ENCODE measurements at regions of chr17 and their contacts with region 1.

Region 1: DNA sequence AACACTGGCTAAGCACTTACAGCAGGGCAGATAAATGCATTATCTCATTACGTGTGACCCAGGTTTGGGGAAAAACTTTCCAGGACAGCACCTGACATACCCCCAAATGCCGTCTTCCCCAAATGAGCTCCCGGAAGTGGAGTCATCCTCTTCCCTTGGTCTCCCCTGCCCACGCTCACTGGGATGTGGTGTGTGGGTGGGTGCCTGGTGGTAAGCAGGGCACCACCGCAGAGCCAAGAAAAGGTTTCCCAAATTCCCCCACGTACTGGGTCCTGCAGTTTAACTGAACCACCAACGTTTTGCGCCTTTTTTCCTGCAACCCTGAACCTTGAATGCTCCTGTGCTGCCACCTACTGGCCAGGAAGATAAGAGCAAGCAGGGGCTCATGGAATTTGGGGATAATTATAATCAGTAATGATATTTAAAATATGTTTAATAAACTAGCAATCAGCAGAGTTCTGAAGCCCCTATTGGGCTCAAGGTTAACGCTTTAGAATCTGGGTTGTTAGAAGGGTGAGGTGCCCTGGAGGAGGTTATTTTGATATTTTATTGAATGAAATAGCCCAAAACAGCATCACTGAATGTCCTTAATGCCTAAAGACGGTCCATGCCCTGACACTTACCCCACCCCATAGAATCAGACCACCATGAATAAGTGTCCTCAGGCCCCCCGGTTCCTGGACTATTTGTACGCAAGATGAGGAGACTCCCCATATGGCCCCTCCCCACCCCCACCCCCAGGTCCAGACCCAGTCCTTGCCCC is 8.0 kb downstream of the SPPL2C start:
- H3K4me3 ChIP-seq: no peak overlapping the region
- H3K27ac ChIP-seq: no peak overlapping the region
- H3K4me1 ChIP-seq: no peaks in the 10 kb centered on the region
- CTCF ChIP-seq: peak; percentile 67

Region 2: DNA sequence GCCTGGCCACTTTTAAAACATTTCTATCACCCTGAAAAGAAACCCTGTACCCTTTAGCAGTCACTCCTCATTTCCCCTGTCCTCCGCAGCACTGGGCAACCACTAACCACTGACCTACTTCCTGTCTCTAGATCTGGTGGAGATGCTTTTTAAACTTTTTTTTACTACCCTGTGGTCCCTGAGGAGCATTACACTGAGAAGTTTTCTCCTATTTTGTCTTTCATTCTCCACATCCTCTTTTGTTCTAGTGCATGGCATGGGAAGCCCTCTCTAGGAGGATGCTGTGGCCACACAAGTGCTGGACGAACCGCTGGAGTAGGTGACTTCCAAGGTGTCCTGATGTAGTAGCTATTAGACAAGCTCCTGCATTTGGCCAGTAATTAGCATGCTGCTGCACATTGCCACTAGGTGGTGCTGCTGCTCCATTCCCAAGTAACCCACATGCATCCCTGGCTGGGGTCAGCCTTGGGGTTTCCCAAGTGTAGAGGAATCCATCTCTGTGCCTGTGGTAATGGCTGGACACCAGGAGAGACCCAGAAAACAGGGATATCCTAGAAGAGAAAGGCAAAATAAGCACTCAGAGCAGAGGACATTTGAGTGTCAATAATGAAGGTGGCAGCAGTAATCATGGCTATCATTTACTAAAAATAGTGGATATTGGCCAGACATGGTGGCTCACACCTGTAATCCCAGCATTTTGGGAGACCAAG is 212.4 kb before region 1 on chr17:
- CTCF ChIA-PET with region 1: interaction called, 49 read pairs
- POLR2A ChIA-PET with region 1: no interaction called
- H3K4me3 ChIP-seq: no peak overlapping the region
- H3K27ac ChIP-seq: no peak overlapping the region
- H3K4me1 ChIP-seq: no peaks in the 10 kb centered on the region
- CTCF ChIP-seq: peak; percentile 89

Region 3: DNA sequence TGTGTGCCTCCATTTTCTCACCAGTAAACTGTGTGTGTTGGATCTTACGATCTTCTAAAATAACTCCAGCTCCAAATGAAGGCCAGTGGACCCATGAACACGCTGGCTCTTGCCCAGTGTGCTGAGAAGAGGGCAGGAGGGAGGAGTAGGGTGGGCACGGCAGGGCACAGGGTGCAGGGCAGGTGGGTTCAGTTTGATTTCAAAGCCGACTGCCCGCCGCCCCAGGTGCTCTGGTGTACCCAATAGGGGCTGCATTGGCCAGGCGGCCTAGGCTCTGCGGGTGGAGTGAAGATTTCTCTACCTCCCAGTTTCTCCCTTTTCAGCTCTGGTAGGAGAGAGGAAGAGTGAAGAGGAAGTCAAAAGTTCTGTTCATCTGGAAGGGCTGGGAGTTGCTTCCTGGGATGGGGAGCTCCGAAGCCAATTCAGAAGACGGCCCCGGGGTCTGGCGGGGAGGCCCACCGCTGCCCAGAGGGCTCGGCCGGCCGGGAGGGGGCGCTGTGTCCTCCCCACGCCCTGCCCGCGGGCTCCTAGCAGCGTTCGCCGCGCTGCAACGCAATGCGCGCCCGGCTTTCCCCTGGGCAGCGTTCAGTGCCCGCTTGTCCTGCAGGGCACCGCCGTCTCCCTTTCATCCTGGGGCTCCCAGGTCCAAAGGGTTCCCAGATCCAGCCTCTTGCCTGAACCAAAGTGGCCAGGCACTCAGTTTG is 69.7 kb before region 1 on chr17:
- CTCF ChIA-PET with region 1: interaction called, 12 read pairs
- POLR2A ChIA-PET with region 1: no interaction called
- H3K4me3 ChIP-seq: peak overlapping the region; percentile 56
- H3K27ac ChIP-seq: peak overlapping the region; percentile 51; the same call in 1 of the 2 replicates
- H3K4me1 ChIP-seq: no peaks in the 10 kb centered on the region
- CTCF ChIP-seq: peak; percentile 82

Region 4: DNA sequence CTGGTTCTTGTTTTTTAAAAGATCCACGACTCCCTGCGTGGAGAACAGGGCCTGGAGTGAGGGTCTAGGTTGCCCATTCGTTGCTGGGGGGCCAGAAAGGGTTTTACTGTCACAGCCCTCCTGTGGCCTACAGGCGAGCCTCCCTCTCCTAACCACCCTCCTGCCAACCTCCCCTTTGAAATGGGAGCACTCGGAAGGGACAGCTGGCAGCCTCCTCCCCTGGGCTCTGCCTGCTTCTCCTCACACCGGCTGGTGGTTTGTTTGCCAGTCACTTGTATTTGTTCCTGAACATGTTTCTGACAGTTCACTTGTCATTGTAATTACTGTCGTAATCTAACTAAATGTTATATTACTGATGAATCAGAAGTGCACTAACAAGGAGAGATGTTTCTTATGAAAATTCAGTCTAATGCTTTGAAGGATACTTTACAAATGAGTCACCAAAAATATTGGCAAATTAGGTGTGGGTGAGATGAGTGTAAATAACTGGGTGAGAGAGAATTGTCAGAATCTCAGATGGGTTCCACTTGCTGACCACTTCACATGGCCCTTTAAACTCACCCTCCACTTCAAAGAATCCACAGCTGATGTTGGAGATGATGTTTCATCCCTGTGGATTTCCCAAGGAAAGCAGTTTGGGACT is 10.7 kb before region 1 on chr17:
- CTCF ChIA-PET with region 1: interaction called, 25 read pairs
- POLR2A ChIA-PET with region 1: no interaction called
- H3K4me3 ChIP-seq: no peak overlapping the region
- H3K27ac ChIP-seq: no peak overlapping the region
- H3K4me1 ChIP-seq: no peaks in the 10 kb centered on the region
- CTCF ChIP-seq: no peak

Measured in HEK293 (cell line).